Naive thymus-derived CD4-positive, alpha-beta T cell (primary cell): ENCODE measurements at regions of chr17 and their contacts with region 1.

Region 1: DNA sequence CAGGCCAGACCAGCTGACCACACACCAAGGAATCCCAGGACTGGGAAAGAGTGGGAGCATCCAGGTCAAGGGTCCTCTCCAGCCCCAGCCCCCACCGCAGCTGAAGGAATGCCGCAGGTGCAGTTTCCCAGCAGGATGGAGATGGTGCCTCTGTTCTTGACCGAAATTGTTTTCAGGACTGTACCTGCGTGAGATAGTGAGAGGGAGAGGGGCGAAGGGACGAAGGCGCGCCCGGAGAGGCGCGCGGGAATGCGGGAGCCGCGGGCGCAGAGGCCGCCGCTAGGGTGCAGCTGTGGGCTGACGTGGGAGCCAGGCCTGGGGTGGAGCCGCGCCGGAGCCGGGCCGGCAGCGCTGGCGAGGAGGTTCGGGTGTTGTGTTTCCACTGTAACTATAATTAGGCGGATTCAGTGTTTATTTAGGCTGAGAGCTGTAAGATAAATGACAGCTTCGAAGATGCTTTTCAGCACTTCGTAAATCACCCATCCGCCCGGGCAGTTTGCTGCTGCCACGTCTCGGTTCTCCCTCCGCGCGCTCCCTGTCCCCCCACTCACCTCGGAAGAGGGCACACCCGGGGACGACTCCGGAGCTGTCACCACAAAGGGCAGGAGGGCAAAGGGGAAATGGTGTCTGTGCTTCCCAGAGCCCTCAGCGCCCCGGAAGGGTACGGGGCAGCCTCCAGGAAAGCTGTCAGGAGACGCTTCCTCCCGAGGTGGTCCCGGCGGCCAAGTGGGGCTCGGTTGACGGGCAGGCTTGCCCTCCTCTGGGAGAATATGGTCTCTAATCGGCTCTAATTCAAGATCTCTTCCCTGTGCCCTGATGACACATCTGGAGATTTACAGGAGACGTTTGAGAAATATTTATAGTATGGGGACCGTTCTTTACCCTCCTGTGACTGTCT is 38.2 kb downstream of the HOXB1 start:
- DNase-seq: peak; percentile 38 to 73 (median 58)
- ATAC-seq: peak; percentile 95
- H3K4me3 ChIP-seq: peak overlapping the region; percentile 54
- H3K4me3 Mint-ChIP-seq: peak overlapping the region; percentile 6 to 79 (median 58)
- H3K27ac ChIP-seq: no peak overlapping the region
- H3K27ac Mint-ChIP-seq: peak overlapping the region in 1 of 9 donors; percentile 88
- H3K4me1 ChIP-seq: peaks cover 6 to 7% of the 10 kb centered on the region in 2 donors
- H3K4me1 Mint-ChIP-seq: peaks cover 0 to 58% (median 7%) of the 10 kb centered on the region in 7 donors
- H3K27me3 ChIP-seq: no peaks in the 10 kb centered on the region
- H3K27me3 Mint-ChIP-seq: peaks cover 6 to 26% (median 16%) of the 10 kb centered on the region in 5 donors

Region 2: GRCh38 chr17:48374650-48375230 is 117.9 kb before region 1 on chr17:
- CTCF ChIA-PET with region 1: no interaction called
- POLR2A ChIA-PET with region 1: no interaction called
- intact Hi-C with region 1: no loop called
- DNase-seq: peak in 5 of 9 donors; percentile 7 to 21 (median 13)
- ATAC-seq: peak; percentile 68
- H3K4me3 ChIP-seq: no peak overlapping the region
- H3K4me3 Mint-ChIP-seq: no peak overlapping the region
- H3K27ac ChIP-seq: no peak overlapping the region
- H3K27ac Mint-ChIP-seq: peak overlapping the region in 2 of 9 donors; percentile 47 to 50
- H3K4me1 ChIP-seq: peaks cover 6 to 17% of the 10 kb centered on the region in 2 donors
- H3K4me1 Mint-ChIP-seq: peaks cover 18 to 44% (median 36%) of the 10 kb centered on the region in 7 donors
- H3K27me3 ChIP-seq: no peaks in the 10 kb centered on the region
- H3K27me3 Mint-ChIP-seq: no peaks in the 10 kb centered on the region

Region 3: GRCh38 chr17:48577946-48578615 is 85.4 kb after region 1 on chr17 and contains the start of gene HOXB4:
- CTCF ChIA-PET with region 1: interaction called, 4 read pairs
- POLR2A ChIA-PET with region 1: interaction called, 4 read pairs
- intact Hi-C with region 1: loop called in 1 of 2 experiments (anchors 1 kb)
- DNase-seq: peak in 6 of 9 donors; percentile 51 to 74 (median 57)
- ATAC-seq: peak; percentile 83
- H3K4me3 ChIP-seq: peak within 1 kb of the TSS; percentile 78
- H3K4me3 Mint-ChIP-seq: peak within 1 kb of the TSS; percentile 88 to 94 (median 90)
- H3K27ac ChIP-seq: no peak within 1 kb of the TSS
- H3K27ac Mint-ChIP-seq: peak within 1 kb of the TSS; percentile 26 to 89 (median 66)
- H3K4me1 ChIP-seq: peaks cover 15 to 27% of the 10 kb centered on the region in 2 donors
- H3K4me1 Mint-ChIP-seq: peaks cover 12 to 62% (median 52%) of the 10 kb centered on the region in 7 donors
- H3K27me3 ChIP-seq: peaks cover 6 to 36% of the 10 kb centered on the region in 2 donors
- H3K27me3 Mint-ChIP-seq: peaks cover 44 to 70% (median 49%) of the 10 kb centered on the region in 5 donors
- total RNA-seq, gene HOXB4: 0.34 to 7.9 (median 2.4) TPM